ENCODE measurements at regions of chr12 and their contacts with region 1.

Region 1: DNA sequence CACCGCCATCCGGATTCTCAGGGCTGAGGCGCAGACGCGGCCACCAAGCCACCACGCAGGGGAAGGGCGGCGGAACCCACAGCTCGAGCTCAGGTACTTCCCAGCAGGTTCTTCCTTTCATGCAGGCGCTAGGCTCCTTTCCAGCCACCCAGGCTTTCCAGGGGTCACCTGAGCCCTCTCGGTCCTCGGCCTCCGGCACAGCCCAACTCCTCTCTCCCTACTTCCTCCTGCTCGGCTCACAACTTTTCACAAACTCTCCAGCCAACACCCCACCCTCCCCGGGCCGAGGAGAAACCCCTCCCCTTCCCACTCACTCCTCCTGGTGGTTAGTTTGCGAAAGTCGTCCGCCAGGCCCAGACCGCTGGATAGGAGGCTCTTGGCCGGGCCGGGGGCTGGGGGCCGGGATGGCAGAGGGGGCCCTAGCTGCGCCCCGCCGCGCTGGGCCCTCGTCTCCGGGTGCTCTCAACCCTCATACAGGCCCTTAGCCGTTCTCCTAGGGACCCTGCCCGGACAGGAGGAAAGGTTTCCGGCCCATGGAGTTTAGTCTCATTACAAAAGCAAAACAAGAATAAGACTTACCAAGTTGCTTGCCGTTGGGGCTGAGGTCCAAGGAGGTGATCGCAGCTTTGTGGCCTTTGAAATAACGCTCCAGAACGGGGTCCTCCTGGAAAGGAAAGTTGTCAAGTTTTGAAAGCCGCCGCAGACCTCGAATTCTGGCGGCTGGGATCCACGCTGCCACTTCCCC is at the start of gene GALNT4:
- DNase-seq: peak; percentile 39
- H3K4me3 ChIP-seq: peak within 1 kb of the TSS; percentile 85
- H3K27me3 ChIP-seq: no peaks in the 10 kb centered on the region
- CTCF ChIP-seq: peak; percentile 81
- polyA plus RNA-seq, gene GALNT4: 2.1 and 4.2 TPM in 2 replicates

Region 2: GRCh38 chr12:89019408-89020120 is 505.1 kb before region 1 on chr12:
- CTCF ChIA-PET with region 1: interaction called, 81 read pairs
- POLR2A ChIA-PET with region 1: no interaction called
- DNase-seq: peak; percentile 41
- H3K4me3 ChIP-seq: peak overlapping the region; percentile 34
- H3K27me3 ChIP-seq: no peaks in the 10 kb centered on the region
- CTCF ChIP-seq: peak; percentile 87

Region 3: DNA sequence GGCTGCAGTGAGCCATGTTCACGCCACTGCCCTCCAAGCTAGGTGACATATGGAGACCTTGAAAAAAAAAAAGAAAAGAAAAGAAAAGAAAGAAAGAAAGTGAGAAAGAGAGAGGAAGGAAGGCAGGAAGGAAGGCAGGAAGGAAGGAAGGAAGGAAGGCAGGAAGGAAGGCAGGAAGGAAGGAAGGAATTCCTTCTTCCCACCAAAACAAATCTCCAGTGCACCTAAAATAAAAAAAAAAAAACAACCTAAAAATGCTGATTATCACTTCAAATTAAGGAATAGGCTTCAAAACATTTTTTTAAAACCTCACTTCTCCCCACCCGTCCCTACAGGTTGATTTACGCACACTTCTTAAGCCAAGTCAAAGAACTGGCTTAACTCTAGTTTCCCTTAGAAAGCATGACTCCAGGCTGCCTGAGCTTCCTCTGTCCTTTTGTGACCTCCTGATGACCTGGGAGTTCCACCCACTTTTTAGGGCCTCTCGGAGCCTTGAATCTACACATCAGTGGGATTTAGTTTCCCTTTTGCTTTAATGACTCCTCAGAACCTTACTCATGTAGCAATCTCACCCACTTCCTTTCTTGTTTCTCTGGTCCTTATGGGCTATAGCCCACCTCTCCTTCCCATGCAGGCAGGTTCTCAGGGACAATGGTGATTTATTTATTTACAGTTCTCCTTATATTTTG is 191.0 kb before region 1 on chr12:
- CTCF ChIA-PET with region 1: no interaction called
- POLR2A ChIA-PET with region 1: interaction called, 15 read pairs
- DNase-seq: no peak
- H3K4me3 ChIP-seq: no peak overlapping the region
- H3K27me3 ChIP-seq: no peaks in the 10 kb centered on the region
- CTCF ChIP-seq: no peak

Region 4: GRCh38 chr12:89373763-89374572 is 150.7 kb before region 1 on chr12:
- CTCF ChIA-PET with region 1: no interaction called
- POLR2A ChIA-PET with region 1: no interaction called
- DNase-seq: peak; percentile 56
- H3K4me3 ChIP-seq: no peak overlapping the region
- H3K27me3 ChIP-seq: no peaks in the 10 kb centered on the region
- CTCF ChIP-seq: no peak

Region 5: DNA sequence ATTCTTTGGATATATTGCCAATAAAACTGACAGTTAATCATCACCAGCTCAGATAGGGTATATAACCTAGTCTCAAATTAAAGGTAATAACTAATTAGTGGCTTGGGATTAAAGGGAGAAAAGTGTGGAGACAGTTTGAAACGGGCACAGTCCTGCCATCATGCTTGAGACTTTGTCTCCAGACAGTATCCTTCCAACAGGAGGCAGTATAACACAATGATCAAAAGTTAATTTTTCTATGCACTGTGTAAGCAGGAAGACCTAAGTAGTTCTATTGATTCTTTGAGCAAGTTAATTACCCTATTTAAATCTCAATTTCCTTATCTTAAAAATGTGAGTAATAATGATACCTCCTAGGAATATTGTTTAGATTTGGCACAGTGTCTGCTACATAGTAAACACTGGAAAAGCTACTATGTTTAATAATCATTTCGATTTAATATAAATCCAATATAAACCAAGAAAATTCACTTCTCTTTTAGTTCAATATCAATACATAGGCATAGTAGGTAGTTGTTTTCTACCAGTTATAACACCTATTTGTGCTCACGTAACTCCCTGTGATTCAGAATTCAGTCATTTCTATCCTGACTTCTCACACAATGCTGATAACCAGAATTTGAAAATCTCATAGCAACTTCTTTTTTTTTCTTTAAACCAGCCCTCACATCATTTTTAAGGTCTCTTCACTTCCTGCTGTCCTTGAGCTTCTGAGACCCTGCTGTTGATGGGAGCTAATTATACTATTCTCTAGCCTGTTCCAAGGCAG is 53.8 kb before region 1 on chr12:
- CTCF ChIA-PET with region 1: interaction called, 104 read pairs
- POLR2A ChIA-PET with region 1: no interaction called
- DNase-seq: no peak
- H3K4me3 ChIP-seq: no peak overlapping the region
- H3K27me3 ChIP-seq: no peaks in the 10 kb centered on the region
- CTCF ChIP-seq: peak; percentile 54

Region 6: GRCh38 chr12:89610366-89610765 is 85.7 kb after region 1 on chr12:
- CTCF ChIA-PET with region 1: no interaction called
- POLR2A ChIA-PET with region 1: no interaction called
- DNase-seq: no peak
- H3K4me3 ChIP-seq: no peak overlapping the region
- H3K27me3 ChIP-seq: no peaks in the 10 kb centered on the region
- CTCF ChIP-seq: no peak

Region 7: DNA sequence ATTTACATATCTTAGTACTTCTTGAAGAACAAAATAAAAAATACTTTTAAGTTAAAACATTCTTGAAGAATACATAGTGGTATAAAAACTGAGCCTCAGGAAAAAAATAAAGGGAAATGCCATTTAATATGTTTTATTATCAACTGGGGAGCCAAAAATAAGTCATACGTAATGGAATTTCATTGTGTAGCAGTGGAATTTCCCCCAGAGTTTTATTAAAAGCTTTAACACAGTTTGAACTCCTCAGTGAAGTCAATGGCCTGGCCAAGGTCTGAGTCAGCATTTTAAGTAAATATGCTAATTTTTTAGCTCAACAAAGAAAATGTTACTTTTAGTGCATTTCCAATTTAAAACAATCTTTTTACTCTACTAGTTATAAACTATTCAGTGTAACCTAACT is 534.0 kb after region 1 on chr12:
- CTCF ChIA-PET with region 1: no interaction called
- POLR2A ChIA-PET with region 1: no interaction called
- DNase-seq: peak; percentile 88
- H3K4me3 ChIP-seq: no peak overlapping the region
- H3K27me3 ChIP-seq: no peaks in the 10 kb centered on the region
- CTCF ChIP-seq: no peak